Activated CD4-positive, alpha-beta memory T cell treated with anti-CD3 and anti-CD28 coated beads for 36 hours (primary cell): ENCODE measurements at regions of chr11 and their contacts with region 1.

Region 1: DNA sequence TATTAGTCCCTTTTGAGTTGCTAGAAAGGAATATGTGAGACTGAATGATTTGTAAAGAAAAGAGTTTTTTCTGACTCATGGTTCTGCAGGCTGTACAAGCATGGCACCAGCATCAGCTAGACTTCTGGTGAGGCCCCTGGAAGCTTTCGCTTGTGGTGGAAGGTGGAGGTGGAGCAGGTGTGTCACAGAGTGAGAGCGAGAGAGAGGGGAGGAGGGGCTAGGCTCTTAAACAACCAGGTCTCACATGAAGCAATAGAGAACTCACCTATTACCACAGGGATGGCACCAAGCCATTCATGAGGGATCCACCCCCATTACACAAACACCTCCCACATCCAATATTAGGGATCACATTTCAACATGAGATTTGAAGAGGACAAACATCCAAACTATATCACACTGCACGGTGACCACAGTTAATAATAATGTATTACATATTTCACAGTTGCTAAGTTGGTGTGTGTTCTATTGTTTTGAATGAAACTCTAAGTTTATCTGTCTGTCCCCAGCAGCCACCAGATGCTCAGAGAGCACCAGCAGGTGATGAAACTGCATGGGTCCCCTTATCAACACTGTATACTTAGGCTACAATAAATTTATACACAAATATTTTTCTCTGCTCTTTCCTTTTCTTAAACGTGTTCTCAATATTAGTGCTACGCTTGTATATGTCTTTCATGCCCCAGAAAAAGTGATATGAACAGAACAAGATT is 14.1 kb downstream of the ZFP91 start:
- DNase-seq: peak; percentile 76
- H3K4me3 Mint-ChIP-seq: no peak overlapping the region
- H3K27ac Mint-ChIP-seq: peak overlapping the region; percentile 45
- H3K4me1 Mint-ChIP-seq: peaks cover 73% of the 10 kb centered on the region
- H3K27me3 Mint-ChIP-seq: no peaks in the 10 kb centered on the region

Region 2: GRCh38 chr11:58609723-58610122 is 16.8 kb after region 1 on chr11:
- CTCF ChIA-PET with region 1: interaction called, 5 read pairs
- POLR2A ChIA-PET with region 1: interaction called, 5 read pairs
- intact Hi-C with region 1: loop called (anchors 1 kb)
- DNase-seq: no peak
- H3K4me3 Mint-ChIP-seq: no peak overlapping the region
- H3K27ac Mint-ChIP-seq: no peak overlapping the region
- H3K4me1 Mint-ChIP-seq: peaks cover 58% of the 10 kb centered on the region
- H3K27me3 Mint-ChIP-seq: no peaks in the 10 kb centered on the region

Region 3: DNA sequence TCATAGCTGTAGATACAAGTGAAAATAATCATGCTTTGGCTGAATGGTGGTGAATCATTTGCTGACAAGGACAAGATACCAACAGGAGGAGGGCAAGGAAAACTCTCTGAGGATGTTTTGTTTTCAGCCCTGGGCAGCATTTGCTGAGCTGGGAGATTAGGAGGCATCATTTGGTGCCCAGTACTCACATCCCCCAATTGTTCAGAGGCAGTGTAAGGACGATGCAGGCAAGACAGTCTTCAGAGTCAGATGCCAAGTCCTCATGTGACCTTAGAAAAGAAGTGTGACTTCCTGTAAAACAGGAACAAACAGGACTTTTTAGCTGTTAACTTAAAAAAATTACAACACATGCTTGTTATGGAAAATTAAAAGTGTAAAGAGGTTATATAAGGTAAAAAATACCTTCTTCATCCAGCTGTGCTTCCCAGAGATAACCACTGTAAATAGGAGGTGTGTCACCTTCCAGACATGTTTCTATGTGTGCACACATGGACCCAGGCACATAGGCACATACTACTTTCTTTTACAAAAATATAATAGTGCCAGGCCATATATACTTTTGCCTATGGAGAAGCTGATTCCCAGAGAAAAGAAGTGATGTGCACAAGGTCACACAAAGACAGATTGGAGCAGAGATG is 47.6 kb after region 1 on chr11:
- CTCF ChIA-PET with region 1: no interaction called
- POLR2A ChIA-PET with region 1: no interaction called
- intact Hi-C with region 1: no loop called
- DNase-seq: no peak
- H3K4me3 Mint-ChIP-seq: no peak overlapping the region
- H3K27ac Mint-ChIP-seq: no peak overlapping the region
- H3K4me1 Mint-ChIP-seq: peaks cover 18% of the 10 kb centered on the region
- H3K27me3 Mint-ChIP-seq: no peaks in the 10 kb centered on the region

Region 4: DNA sequence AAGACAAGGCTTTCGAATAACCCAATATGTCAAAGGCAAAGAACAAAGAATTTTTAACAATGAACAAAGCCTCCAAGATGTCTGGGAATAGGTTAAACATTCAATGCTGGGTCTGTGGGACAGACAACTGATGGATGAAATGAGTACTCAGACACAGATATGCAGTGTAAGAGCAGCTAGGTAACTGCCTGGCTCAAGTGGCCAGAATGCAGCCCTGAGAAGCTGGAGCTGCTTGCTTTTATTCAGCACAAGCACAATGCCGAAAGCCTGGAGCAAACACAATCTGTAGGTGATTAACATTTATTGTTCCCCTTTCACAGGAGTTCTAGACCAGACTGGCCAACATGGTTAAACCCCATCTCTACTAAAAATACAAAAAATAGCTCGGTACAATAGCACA is 114.9 kb after region 1 on chr11:
- CTCF ChIA-PET with region 1: no interaction called
- POLR2A ChIA-PET with region 1: no interaction called
- intact Hi-C with region 1: no loop called
- DNase-seq: no peak
- H3K4me3 Mint-ChIP-seq: no peak overlapping the region
- H3K27ac Mint-ChIP-seq: no peak overlapping the region
- H3K4me1 Mint-ChIP-seq: no peaks in the 10 kb centered on the region
- H3K27me3 Mint-ChIP-seq: no peaks in the 10 kb centered on the region